Cardiac septum (tissue), 1 donor: ENCODE measurements at regions of chr22 and their contacts with region 1.

Region 1: GRCh38 chr22:24433813-24434470 is 6.5 kb downstream of the ADORA2A start:
- DNase-seq: no peak

Region 2: GRCh38 chr22:24379536-24379935 is 54.4 kb before region 1 on chr22:
- intact Hi-C with region 1: no loop called
- DNase-seq: no peak

Region 3: GRCh38 chr22:24466716-24467328 is 32.9 kb after region 1 on chr22:
- intact Hi-C with region 1: loop called (anchors 5 kb)
- DNase-seq: no peak